CD8-positive, alpha-beta T cell (primary cell): ENCODE measurements at regions of chr4 and their contacts with region 1.

Region 1: GRCh38 chr4:113766882-113767281 is 5.3 kb upstream of the CAMK2D start:
- DNase-seq: no peak
- ATAC-seq: no peak
- H3K4me3 ChIP-seq: no peak overlapping the region
- H3K4me3 Mint-ChIP-seq: no peak overlapping the region
- H3K27ac ChIP-seq: no peak overlapping the region
- H3K27ac Mint-ChIP-seq: no peak overlapping the region
- H3K4me1 ChIP-seq: peaks cover 8% of the 10 kb centered on the region
- H3K4me1 Mint-ChIP-seq: peaks cover 9% of the 10 kb centered on the region
- H3K27me3 ChIP-seq: no peaks in the 10 kb centered on the region
- H3K27me3 Mint-ChIP-seq: no peaks in the 10 kb centered on the region
- CTCF ChIP-seq: no peak

Region 2: GRCh38 chr4:112515304-112516067 is 1251.4 kb before region 1 on chr4:
- CTCF ChIA-PET with region 1: no interaction called
- POLR2A ChIA-PET with region 1: no interaction called
- intact Hi-C with region 1: loop called in 1 of 2 experiments (anchors 5 kb)
- DNase-seq: peak in 4 of 9 experiments; percentile 22 to 65 (median 46)
- ATAC-seq: peak; percentile 60
- H3K4me3 ChIP-seq: peak overlapping the region; percentile 51 to 58
- H3K4me3 Mint-ChIP-seq: peak overlapping the region; percentile 86
- H3K27ac ChIP-seq: no peak overlapping the region
- H3K27ac Mint-ChIP-seq: no peak overlapping the region
- H3K4me1 ChIP-seq: peaks cover 38% of the 10 kb centered on the region
- H3K4me1 Mint-ChIP-seq: peaks cover 47% of the 10 kb centered on the region
- H3K27me3 ChIP-seq: peaks cover 72 to 74% of the 10 kb centered on the region in 2 experiments
- H3K27me3 Mint-ChIP-seq: peaks cover 83% of the 10 kb centered on the region
- CTCF ChIP-seq: no peak

Region 3: GRCh38 chr4:113040793-113041192 is 726.1 kb before region 1 on chr4:
- CTCF ChIA-PET with region 1: no interaction called
- POLR2A ChIA-PET with region 1: no interaction called
- intact Hi-C with region 1: no loop called
- DNase-seq: no peak
- ATAC-seq: no peak
- H3K4me3 ChIP-seq: no peak overlapping the region
- H3K4me3 Mint-ChIP-seq: no peak overlapping the region
- H3K27ac ChIP-seq: no peak overlapping the region
- H3K27ac Mint-ChIP-seq: no peak overlapping the region
- H3K4me1 ChIP-seq: no peaks in the 10 kb centered on the region
- H3K4me1 Mint-ChIP-seq: no peaks in the 10 kb centered on the region
- H3K27me3 ChIP-seq: no peaks in the 10 kb centered on the region
- H3K27me3 Mint-ChIP-seq: no peaks in the 10 kb centered on the region
- CTCF ChIP-seq: no peak